Posterior vena cava (tissue), 2 donors: ENCODE measurements at regions of chr7 and their contacts with region 1.

Region 1: DNA sequence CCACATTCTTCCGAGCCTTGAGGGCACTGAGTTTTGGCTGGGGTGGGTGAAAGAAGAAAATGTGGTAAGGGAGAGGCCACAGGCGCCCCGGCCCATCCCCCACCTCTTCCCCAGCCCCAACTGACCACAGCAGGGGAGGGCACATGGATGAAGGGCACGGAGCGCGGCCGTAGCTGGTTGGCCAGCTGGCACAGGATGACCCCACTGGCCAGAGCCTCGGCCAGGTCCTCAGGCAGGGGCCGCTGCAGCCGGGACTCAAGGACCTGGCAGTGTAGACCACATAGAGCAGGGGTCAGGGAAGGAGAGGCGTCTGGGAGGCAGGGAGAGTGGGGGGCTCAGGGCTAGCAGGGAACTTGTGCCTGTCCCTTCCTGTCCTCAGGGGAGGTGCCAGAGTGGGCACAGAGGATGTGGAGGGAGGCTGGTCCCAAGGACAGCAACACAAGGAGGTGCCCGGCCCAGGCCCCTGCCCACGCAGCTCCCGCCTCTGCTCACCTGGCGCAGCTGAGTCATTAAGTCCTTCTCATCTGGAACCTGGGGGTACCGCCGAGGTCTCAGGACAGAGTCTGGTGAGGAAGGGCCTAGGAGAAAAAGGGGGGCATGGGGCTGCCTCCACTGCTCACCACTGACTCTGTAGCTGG is 2.2 kb upstream of the SAP25 start:
- DNase-seq: peak; percentile 65

Region 2: GRCh38 chr7:100588438-100588837 is 12.6 kb after region 1 on chr7:
- intact Hi-C with region 1: loop called in 1 of 2 experiments (anchors 1 kb)
- DNase-seq: no peak